CD8-positive, alpha-beta T cell (primary cell): ENCODE measurements at regions of chr6 and their contacts with region 1.

Region 1: GRCh38 chr6:31739639-31740396 is at the start of gene MSH5:
- DNase-seq: peak; percentile 86 to 98 (median 94)
- ATAC-seq: peak; percentile 86
- H3K4me3 ChIP-seq: peak within 1 kb of the TSS; percentile 81 to 85
- H3K4me3 Mint-ChIP-seq: peak within 1 kb of the TSS; percentile 98
- H3K27ac ChIP-seq: peak within 1 kb of the TSS; percentile 28 to 94
- H3K27ac Mint-ChIP-seq: peak within 1 kb of the TSS; percentile 90
- H3K4me1 ChIP-seq: peaks cover 43% of the 10 kb centered on the region
- H3K4me1 Mint-ChIP-seq: peaks cover 56% of the 10 kb centered on the region
- H3K27me3 ChIP-seq: no peaks in the 10 kb centered on the region
- H3K27me3 Mint-ChIP-seq: no peaks in the 10 kb centered on the region
- CTCF ChIP-seq: no peak
- total RNA-seq, gene MSH5: 7.5 to 8.4 TPM

Region 2: DNA sequence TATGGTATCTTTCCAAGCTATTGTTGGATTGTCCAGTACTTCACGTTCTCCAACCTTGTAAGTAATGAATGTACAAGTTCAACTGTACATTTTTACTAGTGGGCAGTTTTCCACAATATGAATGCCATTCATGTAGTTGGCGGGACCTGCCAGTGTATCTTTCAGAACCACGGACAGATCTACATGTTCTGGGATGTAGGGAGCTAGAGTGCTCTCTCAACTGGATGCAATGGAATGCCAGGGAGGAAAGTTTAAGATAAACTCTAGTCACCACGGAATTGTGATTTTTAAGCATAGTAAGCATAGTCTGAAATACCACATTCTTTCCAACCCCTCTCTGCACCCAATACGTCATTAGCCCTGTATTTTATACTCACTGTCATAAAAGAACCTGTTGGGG is 446.5 kb before region 1 on chr6:
- CTCF ChIA-PET with region 1: no interaction called
- POLR2A ChIA-PET with region 1: no interaction called
- intact Hi-C with region 1: no loop called
- DNase-seq: no peak
- ATAC-seq: no peak
- H3K4me3 ChIP-seq: no peak overlapping the region
- H3K4me3 Mint-ChIP-seq: no peak overlapping the region
- H3K27ac ChIP-seq: no peak overlapping the region
- H3K27ac Mint-ChIP-seq: no peak overlapping the region
- H3K4me1 ChIP-seq: no peaks in the 10 kb centered on the region
- H3K4me1 Mint-ChIP-seq: no peaks in the 10 kb centered on the region
- H3K27me3 ChIP-seq: peaks cover 0 to 2% of the 10 kb centered on the region in 2 experiments
- H3K27me3 Mint-ChIP-seq: peaks cover 3% of the 10 kb centered on the region
- CTCF ChIP-seq: no peak

Region 3: GRCh38 chr6:31665501-31666336 is 74.1 kb before region 1 on chr6 and contains the start of gene CSNK2B:
- CTCF ChIA-PET with region 1: no interaction called
- POLR2A ChIA-PET with region 1: interaction called, 3 read pairs
- intact Hi-C with region 1: loop called (anchors 2 to 5 kb)
- DNase-seq: peak; percentile 95 to 99 (median 98)
- ATAC-seq: peak; percentile 84
- H3K4me3 ChIP-seq: peak within 1 kb of the TSS; percentile 91 to 94
- H3K4me3 Mint-ChIP-seq: peak within 1 kb of the TSS; percentile 95
- H3K27ac ChIP-seq: peak within 1 kb of the TSS; percentile 96 to 99
- H3K27ac Mint-ChIP-seq: peak within 1 kb of the TSS; percentile 98
- H3K4me1 ChIP-seq: peaks cover 44% of the 10 kb centered on the region
- H3K4me1 Mint-ChIP-seq: peaks cover 56% of the 10 kb centered on the region
- H3K27me3 ChIP-seq: no peaks in the 10 kb centered on the region
- H3K27me3 Mint-ChIP-seq: no peaks in the 10 kb centered on the region
- CTCF ChIP-seq: no peak
- total RNA-seq, gene CSNK2B: 80.9 to 86.1 TPM

Region 4: DNA sequence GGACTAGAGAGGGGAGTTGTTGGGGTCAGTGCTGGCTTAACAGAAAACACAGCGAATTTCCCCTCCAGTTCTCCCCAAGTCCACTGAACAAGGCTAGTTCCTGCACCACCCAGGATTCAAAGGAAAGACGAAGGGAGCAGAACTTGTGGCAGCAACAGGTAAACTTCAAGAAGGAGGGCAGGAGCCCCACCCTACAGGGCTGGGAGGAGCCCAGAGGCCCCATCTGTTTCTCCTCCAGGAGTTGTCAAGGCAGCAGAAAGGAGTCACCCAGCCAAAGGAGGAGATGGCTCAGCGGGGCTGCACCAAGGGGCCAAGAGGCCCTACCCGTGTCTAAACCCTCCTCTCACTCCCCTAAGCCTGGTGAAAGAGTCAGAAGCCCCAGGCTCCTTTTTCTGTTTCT is 24.4 kb after region 1 on chr6:
- CTCF ChIA-PET with region 1: interaction called, 25 read pairs
- POLR2A ChIA-PET with region 1: interaction called, 6 read pairs
- intact Hi-C with region 1: loop called in 1 of 2 experiments (anchors 1 kb)
- DNase-seq: no peak
- ATAC-seq: no peak
- H3K4me3 ChIP-seq: no peak overlapping the region
- H3K4me3 Mint-ChIP-seq: no peak overlapping the region
- H3K27ac ChIP-seq: no peak overlapping the region
- H3K27ac Mint-ChIP-seq: no peak overlapping the region
- H3K4me1 ChIP-seq: no peaks in the 10 kb centered on the region
- H3K4me1 Mint-ChIP-seq: peaks cover under 1% of the 10 kb centered on the region
- H3K27me3 ChIP-seq: no peaks in the 10 kb centered on the region
- H3K27me3 Mint-ChIP-seq: no peaks in the 10 kb centered on the region
- CTCF ChIP-seq: no peak

Region 5: DNA sequence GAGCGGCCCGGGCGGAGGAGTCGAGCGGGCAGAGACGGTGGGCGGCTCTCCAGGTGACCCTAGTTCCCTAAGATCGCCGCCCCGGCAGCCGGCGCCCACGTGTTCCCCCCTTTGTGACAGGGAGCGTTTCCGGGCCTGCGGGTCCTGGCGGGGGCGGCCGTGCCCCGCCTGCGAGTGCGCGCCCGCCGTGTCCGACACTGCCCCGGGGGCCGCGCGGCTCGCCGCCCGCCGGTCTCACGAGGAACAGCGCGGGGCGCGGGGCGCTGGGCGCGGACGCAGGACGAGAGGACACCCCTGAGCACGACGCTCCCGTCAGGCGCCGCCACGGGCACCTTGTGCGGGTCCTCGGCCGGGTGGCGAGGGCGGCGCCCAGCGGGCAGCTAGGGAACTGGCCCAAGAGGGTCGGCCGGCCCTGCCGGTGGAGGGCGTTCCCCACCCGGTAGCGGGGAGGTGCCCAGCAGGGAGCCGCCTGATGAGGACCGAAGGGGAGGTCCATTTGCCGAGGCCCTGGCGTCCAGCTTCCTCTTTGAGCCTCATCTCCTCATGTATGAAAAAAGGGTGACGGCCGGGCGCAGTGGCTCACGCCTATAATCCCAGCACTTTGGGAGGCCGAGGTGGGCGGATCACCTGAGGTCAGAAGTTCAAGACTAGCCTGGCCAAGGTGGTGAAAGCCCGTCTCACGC is 55.9 kb after region 1 on chr6 and contains the start of gene VARS1:
- CTCF ChIA-PET with region 1: interaction called, 4 read pairs
- POLR2A ChIA-PET with region 1: interaction called, 7 read pairs
- intact Hi-C with region 1: loop called in 1 of 2 experiments (anchors 1 kb)
- DNase-seq: peak; percentile 68 to 93 (median 83)
- ATAC-seq: peak; percentile 88
- H3K4me3 ChIP-seq: peak within 1 kb of the TSS; percentile 63 to 93
- H3K4me3 Mint-ChIP-seq: peak within 1 kb of the TSS; percentile 94
- H3K27ac ChIP-seq: peak within 1 kb of the TSS; percentile 74 to 83
- H3K27ac Mint-ChIP-seq: peak within 1 kb of the TSS; percentile 98
- H3K4me1 ChIP-seq: peaks cover 44% of the 10 kb centered on the region
- H3K4me1 Mint-ChIP-seq: peaks cover 44% of the 10 kb centered on the region
- H3K27me3 ChIP-seq: no peaks in the 10 kb centered on the region
- H3K27me3 Mint-ChIP-seq: no peaks in the 10 kb centered on the region
- CTCF ChIP-seq: peak; percentile 70
- total RNA-seq, gene VARS1: 29.8 to 33.3 TPM

Region 6: GRCh38 chr6:31862344-31863227 is 122.8 kb after region 1 on chr6 and contains the start of gene NEU1:
- CTCF ChIA-PET with region 1: interaction called, 3 read pairs
- POLR2A ChIA-PET with region 1: interaction called, 3 read pairs
- intact Hi-C with region 1: loop called in 1 of 2 experiments (anchors 1 kb)
- DNase-seq: peak; percentile 97 to 100 (median 98)
- ATAC-seq: peak; percentile 91
- H3K4me3 ChIP-seq: peak within 1 kb of the TSS; percentile 75 to 94
- H3K4me3 Mint-ChIP-seq: peak within 1 kb of the TSS; percentile 95
- H3K27ac ChIP-seq: peak within 1 kb of the TSS; percentile 77 to 97
- H3K27ac Mint-ChIP-seq: peak within 1 kb of the TSS; percentile 98
- H3K4me1 ChIP-seq: peaks cover 17% of the 10 kb centered on the region
- H3K4me1 Mint-ChIP-seq: peaks cover 23% of the 10 kb centered on the region
- H3K27me3 ChIP-seq: no peaks in the 10 kb centered on the region
- H3K27me3 Mint-ChIP-seq: no peaks in the 10 kb centered on the region
- CTCF ChIP-seq: no peak
- total RNA-seq, gene NEU1: 30.0 to 30.2 TPM

Region 7: DNA sequence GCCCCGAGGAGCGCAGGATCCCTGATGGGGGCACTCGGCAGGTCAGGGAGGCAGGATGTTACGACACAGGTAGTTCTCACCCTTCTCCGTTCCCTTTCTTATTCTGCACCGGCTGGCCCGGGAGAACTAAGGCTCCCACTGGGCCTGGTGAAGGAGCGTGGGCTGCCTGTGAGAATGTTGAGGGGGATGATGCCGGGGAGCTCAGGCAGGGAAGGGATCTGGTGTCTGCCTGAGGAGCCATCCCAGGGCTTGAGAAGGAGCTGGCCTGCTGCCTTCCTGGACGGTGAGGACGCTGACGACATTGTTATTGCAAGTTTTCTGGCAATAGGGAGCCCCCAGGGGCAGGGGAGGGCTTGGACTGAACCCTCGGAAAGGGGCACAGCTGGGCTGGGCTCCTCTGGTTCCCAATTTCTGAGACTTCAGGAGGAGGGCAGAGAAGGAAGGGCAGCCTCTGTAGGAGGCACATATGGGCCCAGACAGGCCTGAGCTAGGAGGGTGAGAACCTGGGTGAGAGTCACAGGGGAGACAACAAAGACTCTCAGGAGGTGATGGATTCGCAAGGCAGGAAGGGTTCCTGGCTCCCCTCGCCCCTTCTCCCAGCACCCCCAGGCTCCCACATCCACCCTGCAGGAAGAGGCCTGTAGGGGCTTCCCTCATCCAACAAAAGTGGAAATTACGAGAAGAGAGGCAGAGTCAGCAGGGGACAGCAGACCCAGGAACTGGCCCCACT is 331.2 kb after region 1 on chr6:
- CTCF ChIA-PET with region 1: no interaction called
- POLR2A ChIA-PET with region 1: no interaction called
- intact Hi-C with region 1: no loop called
- DNase-seq: no peak
- ATAC-seq: no peak
- H3K4me3 ChIP-seq: no peak overlapping the region
- H3K4me3 Mint-ChIP-seq: no peak overlapping the region
- H3K27ac ChIP-seq: no peak overlapping the region
- H3K27ac Mint-ChIP-seq: no peak overlapping the region
- H3K4me1 ChIP-seq: no peaks in the 10 kb centered on the region
- H3K4me1 Mint-ChIP-seq: no peaks in the 10 kb centered on the region
- H3K27me3 ChIP-seq: no peaks in the 10 kb centered on the region
- H3K27me3 Mint-ChIP-seq: peaks cover 3% of the 10 kb centered on the region
- CTCF ChIP-seq: no peak

Region 8: DNA sequence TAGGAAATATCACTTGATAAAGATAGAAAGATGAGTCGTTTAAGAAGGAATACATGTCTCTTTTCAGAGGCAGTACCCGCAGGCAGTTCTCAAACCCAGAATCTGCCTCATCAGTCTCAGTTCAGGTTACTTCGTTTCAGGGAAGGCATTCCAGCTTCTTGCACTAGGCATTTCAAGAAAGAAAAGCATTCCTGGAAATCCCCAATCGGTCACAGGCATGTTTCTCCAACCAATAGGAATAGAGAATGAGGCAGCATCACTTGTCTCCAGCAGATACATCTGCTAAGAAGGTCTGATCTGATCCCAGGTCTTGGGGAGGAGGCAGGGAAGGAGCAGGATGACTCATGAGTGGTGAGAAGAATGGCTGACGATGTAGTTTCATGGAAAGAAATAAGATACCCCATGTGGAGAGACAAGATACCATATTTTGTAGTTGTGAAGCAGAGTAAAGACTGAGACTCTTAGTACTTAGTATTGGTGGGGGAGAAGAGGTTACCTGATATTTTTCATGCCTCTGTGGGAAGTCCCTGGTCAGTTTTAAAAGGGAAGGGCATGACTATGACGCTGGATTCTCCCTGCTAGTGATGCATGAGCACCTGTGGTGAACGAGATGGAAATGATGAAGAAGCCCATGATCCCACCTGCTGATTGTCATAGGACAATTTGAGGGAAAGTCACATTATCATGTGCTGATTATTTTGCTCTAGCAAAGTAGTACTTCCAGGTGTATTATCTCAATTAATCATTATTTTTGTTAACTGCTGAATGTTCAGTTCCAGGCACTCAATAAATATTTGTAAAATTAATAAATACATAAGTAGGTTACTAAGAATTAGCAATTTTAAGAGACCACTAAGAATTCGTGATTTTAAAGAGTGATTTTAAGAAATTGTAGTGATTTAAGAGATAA is 870.2 kb after region 1 on chr6:
- CTCF ChIA-PET with region 1: no interaction called
- POLR2A ChIA-PET with region 1: no interaction called
- intact Hi-C with region 1: loop called in 1 of 2 experiments (anchors 10 kb)
- DNase-seq: peak in 7 of 9 experiments; percentile 2 to 97 (median 46)
- ATAC-seq: peak; percentile 94
- H3K4me3 ChIP-seq: peak overlapping the region in 1 of 2 experiments; percentile 44
- H3K4me3 Mint-ChIP-seq: no peak overlapping the region
- H3K27ac ChIP-seq: peak overlapping the region; percentile 64 to 93
- H3K27ac Mint-ChIP-seq: no peak overlapping the region
- H3K4me1 ChIP-seq: peaks cover 11% of the 10 kb centered on the region
- H3K4me1 Mint-ChIP-seq: no peaks in the 10 kb centered on the region
- H3K27me3 ChIP-seq: no peaks in the 10 kb centered on the region
- H3K27me3 Mint-ChIP-seq: peaks cover 3% of the 10 kb centered on the region
- CTCF ChIP-seq: no peak